MCF 10A (cell line): ENCODE measurements at regions of chr3 and their contacts with region 1.

Region 1: DNA sequence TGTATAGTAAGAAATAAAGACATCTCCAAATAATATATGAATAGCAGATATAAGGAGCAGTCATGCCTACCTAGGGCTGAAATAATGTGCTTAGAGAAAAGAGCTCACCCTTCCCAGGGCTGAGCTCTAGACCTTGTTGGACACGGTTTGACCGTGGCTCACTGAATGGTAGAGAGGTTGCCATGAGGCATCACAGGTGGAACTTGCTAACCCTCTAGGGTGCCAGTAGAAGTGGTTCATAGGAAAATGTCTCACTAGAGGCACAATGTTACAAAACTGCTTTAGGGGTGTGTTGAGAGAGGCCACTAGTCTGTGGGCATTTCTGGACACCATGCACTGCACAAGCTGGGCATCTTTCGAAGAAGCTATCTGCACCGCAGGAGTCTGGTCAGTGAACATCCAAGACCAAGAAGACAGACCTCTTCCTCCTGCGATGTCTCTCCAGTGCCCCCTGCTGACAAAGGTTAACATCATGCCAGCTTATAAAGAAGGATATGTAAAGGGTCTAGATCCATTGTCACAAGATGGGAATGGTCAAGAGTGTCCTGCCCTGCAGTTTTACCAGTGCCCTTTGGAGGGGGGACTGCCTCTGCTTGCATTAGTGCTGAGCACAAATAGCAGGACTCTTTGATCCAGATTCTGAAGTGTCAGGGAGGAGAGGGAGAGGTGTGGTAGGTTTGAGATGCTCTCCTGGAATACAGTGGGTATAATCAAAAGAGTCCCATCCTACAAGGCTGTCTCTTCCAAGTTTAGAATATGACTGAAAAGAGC is 266.8 kb downstream of the ZNF385D start:
- DNase-seq: peak; percentile 85
- H3K4me3 Mint-ChIP-seq: no peak overlapping the region
- H3K27ac Mint-ChIP-seq: no peak overlapping the region
- H3K4me1 Mint-ChIP-seq: no peaks in the 10 kb centered on the region
- H3K27me3 Mint-ChIP-seq: no peaks in the 10 kb centered on the region
- CTCF ChIP-seq: peak; percentile 68

Region 2: DNA sequence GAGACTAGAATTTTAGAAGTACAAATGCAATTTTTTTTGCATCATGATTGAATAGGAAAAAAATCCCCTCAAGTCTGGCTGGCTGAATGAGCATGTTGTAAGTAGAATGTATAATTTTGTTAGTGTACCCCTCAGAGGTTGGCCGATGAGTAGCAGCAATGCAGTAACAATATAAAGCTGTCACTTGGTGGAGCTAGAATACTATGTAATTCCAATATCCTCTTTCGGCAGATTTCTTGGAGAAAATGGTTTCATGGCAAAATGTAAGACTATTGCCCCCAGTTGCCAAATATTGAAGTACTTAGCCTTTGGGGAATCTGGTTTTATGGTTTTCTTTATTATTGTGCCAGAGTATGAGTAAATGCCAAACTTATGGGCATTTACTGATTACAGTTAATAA is 1258.5 kb before region 1 on chr3:
- CTCF ChIA-PET with region 1: interaction called, 3 read pairs
- POLR2A ChIA-PET with region 1: no interaction called
- intact Hi-C with region 1: loop called (anchors 2 kb)
- DNase-seq: peak; percentile 39
- H3K4me3 Mint-ChIP-seq: no peak overlapping the region
- H3K27ac Mint-ChIP-seq: no peak overlapping the region
- H3K4me1 Mint-ChIP-seq: no peaks in the 10 kb centered on the region
- H3K27me3 Mint-ChIP-seq: no peaks in the 10 kb centered on the region
- CTCF ChIP-seq: peak; percentile 37

Region 3: DNA sequence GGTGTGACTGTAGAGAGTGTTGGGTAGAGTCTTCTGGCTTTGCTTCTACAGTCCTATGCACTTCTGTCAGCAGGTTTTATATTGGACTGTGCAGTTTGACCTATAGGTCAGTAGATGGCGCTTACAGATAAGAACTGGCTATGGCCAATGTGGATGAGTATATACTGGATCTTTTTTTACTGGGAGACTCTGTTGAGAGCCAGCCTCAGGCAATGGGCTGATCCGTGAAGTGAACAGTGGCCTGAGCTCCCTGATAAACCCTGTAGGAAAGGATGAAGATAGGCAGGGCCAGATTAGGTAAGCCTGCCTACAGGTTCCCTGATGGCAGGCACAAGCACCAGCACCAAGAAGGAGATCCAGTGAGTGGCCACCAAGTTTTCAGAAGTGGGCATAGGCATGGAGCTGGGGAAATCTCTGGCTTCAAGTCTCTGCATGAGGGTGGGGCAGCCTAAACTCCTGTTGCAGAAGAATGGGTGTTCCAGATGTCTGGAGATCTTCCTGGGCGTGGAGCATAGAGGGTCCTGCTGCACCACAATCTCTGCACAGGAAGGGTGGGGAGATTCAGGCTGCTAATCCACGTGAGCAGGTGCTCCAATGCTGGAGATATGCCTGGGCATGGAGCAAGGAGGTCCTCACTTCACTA is 972.3 kb before region 1 on chr3:
- CTCF ChIA-PET with region 1: interaction called, 53 read pairs
- POLR2A ChIA-PET with region 1: no interaction called
- intact Hi-C with region 1: loop called (anchors 1 kb)
- DNase-seq: peak; percentile 62
- H3K4me3 Mint-ChIP-seq: no peak overlapping the region
- H3K27ac Mint-ChIP-seq: no peak overlapping the region
- H3K4me1 Mint-ChIP-seq: peaks cover 5% of the 10 kb centered on the region
- H3K27me3 Mint-ChIP-seq: no peaks in the 10 kb centered on the region
- CTCF ChIP-seq: peak; percentile 76

Region 4: DNA sequence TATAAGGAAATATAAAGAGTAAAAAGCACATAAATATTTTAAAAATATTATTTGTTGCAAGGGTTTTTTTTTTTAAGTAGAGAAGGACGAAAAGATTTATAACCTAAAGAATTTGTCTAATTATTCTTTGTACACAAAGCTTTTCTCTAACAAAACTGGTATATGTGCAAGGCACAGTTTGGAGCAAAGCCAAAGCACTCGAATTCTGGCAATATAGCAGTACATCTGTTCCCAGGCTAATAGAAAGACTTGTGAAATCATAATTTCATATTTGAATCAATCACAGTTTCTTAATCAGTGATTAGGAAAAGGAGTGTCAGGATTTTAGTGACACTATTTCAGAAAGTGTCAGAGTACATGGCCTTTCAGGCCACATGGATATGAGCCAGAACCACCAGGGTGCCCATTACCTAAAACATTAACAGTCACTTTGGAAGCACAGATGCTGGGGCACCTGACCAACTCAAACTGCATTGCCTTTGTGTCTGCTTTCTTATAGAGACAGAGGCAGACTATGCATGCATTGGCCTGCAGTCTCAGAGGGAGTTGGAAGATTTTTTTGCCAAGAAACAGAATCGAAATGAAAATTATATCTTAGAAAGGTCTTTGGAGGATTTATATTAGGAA is 646.5 kb before region 1 on chr3:
- CTCF ChIA-PET with region 1: no interaction called
- POLR2A ChIA-PET with region 1: no interaction called
- intact Hi-C with region 1: no loop called
- DNase-seq: peak; percentile 34
- H3K4me3 Mint-ChIP-seq: no peak overlapping the region
- H3K27ac Mint-ChIP-seq: no peak overlapping the region
- H3K4me1 Mint-ChIP-seq: peaks cover 12% of the 10 kb centered on the region
- H3K27me3 Mint-ChIP-seq: no peaks in the 10 kb centered on the region
- CTCF ChIP-seq: no peak

Region 5: GRCh38 chr3:21017115-21017852 is 467.0 kb before region 1 on chr3:
- CTCF ChIA-PET with region 1: interaction called, 18 read pairs
- POLR2A ChIA-PET with region 1: no interaction called
- intact Hi-C with region 1: loop called (anchors 1 kb)
- DNase-seq: peak; percentile 90
- H3K4me3 Mint-ChIP-seq: peak overlapping the region; percentile 26
- H3K27ac Mint-ChIP-seq: no peak overlapping the region
- H3K4me1 Mint-ChIP-seq: peaks cover 17% of the 10 kb centered on the region
- H3K27me3 Mint-ChIP-seq: no peaks in the 10 kb centered on the region
- CTCF ChIP-seq: peak; percentile 29

Region 6: GRCh38 chr3:21500834-21501233 is 16.6 kb after region 1 on chr3:
- CTCF ChIA-PET with region 1: interaction called, 10 read pairs
- POLR2A ChIA-PET with region 1: no interaction called
- intact Hi-C with region 1: no loop called
- DNase-seq: no peak
- H3K4me3 Mint-ChIP-seq: no peak overlapping the region
- H3K27ac Mint-ChIP-seq: no peak overlapping the region
- H3K4me1 Mint-ChIP-seq: peaks cover 5% of the 10 kb centered on the region
- H3K27me3 Mint-ChIP-seq: no peaks in the 10 kb centered on the region
- CTCF ChIP-seq: no peak

Region 7: DNA sequence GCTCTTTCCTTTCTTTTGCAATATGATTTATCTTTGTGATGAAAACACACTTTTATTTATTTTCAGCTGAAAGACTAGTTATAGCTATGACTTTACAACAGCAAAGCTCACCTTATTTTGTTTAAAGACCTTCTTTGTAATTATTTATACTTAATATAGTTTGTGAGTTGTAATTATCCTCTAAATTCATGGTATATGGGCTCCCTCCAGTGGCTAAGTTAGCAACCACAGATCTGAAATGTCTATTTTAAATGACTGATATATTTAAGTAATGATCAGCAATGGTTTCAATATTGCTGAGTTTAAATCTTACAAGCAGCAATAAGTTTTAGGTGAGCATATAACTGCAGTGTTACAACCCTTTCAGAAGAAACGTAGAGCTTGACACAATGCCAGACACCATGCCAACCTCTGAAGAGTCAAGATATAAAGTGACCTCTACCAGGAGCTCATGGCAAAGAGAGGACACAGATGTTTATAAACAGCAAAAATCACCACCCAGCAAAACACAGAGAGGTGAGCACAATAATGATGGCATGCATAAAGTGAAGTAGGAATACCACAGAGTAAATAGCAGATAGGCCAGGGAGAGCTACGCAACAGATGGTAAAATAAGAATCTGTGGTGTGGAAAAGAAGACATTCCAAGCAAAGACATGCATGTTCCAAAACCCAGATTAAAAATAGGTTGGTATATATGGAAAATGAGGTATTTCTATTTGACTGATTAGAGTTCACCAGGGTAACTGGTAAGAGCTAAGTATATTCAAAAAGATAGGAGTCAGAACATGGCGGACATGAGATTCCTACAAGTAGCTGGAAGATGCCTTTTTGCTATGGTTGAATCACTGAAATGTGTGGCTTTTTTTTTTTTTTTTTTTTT is 410.5 kb after region 1 on chr3:
- CTCF ChIA-PET with region 1: interaction called, 8 read pairs
- POLR2A ChIA-PET with region 1: no interaction called
- intact Hi-C with region 1: loop called (anchors 2 kb)
- DNase-seq: peak; percentile 47
- H3K4me3 Mint-ChIP-seq: no peak overlapping the region
- H3K27ac Mint-ChIP-seq: no peak overlapping the region
- H3K4me1 Mint-ChIP-seq: no peaks in the 10 kb centered on the region
- H3K27me3 Mint-ChIP-seq: no peaks in the 10 kb centered on the region
- CTCF ChIP-seq: peak; percentile 67